H1 (cell line): ENCODE measurements at regions of chr19 and their contacts with region 1.

Region 1: GRCh38 chr19:49676690-49677231 is 310 bp upstream of the PRMT1 start:
- DNase-seq: peak; percentile 99 to 100
- H3K4me3 ChIP-seq: peak overlapping the region; percentile 82 to 99 (median 86)
- H3K27ac ChIP-seq: peak overlapping the region; percentile 100
- H3K4me1 ChIP-seq: peaks cover 2 to 19% (median 11%) of the 10 kb centered on the region in 4 experiments
- H3K27me3 ChIP-seq: no peaks in the 10 kb centered on the region
- CTCF ChIP-seq: no peak
- EP300 ChIP-seq: no peak
- POLR2A ChIP-seq: no peak
- RAD21 ChIP-seq: no peak

Region 2: DNA sequence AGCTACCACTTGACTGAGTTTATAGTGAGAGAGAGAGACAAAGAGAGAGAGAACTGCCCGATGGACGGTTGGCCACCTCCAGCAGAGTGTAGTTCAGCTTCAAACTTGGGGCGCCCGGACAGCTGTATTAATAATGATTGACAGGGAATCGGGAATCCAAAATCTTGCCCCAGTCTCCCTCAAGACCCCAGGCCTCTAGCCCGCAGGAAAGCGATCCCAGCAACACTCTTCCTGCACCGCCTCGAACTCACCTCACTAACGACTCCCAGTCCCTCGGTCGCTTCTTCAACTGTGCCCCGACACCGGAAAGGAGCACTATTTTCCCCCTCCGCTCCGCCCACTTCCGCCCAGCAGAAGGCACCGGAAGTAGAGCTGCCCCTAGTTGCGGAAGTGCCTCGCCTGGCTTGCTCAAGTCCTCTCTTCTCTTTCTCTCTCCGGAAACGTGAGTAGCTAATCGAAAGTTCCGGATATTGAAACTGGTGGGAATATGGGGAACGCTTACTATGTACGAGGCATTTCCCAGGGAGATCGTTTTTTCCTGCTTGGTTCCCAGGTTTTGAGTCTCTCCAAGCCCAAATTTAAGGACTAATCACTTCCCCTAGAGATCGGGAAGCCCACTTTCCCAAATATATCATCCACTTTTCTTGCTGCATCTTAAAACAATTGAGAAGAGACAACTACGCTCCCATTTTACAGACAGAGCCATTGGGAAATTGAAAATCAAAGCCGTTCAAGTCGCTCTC is 96.3 kb before region 1 on chr19 and contains the start of gene NOSIP:
- CTCF ChIA-PET with region 1: interaction called, 3 read pairs
- POLR2A ChIA-PET with region 1: interaction called, 30 read pairs
- DNase-seq: peak; percentile 89 to 95
- H3K4me3 ChIP-seq: peak within 1 kb of the TSS; percentile 87 to 99 (median 92)
- H3K27ac ChIP-seq: peak within 1 kb of the TSS; percentile 51
- H3K4me1 ChIP-seq: peaks cover 2 to 19% (median 8%) of the 10 kb centered on the region in 4 experiments
- H3K27me3 ChIP-seq: no peaks in the 10 kb centered on the region
- CTCF ChIP-seq: no peak
- EP300 ChIP-seq: 0 out of 3 replicates have a peak, but pooled peaks of 1 of the 2 experiments have one; percentile 47
- POLR2A ChIP-seq: peak; percentile 95 to 99
- RAD21 ChIP-seq: no peak
- total RNA-seq, gene NOSIP: 85.1 and 93.8 TPM in 2 replicates

Region 3: DNA sequence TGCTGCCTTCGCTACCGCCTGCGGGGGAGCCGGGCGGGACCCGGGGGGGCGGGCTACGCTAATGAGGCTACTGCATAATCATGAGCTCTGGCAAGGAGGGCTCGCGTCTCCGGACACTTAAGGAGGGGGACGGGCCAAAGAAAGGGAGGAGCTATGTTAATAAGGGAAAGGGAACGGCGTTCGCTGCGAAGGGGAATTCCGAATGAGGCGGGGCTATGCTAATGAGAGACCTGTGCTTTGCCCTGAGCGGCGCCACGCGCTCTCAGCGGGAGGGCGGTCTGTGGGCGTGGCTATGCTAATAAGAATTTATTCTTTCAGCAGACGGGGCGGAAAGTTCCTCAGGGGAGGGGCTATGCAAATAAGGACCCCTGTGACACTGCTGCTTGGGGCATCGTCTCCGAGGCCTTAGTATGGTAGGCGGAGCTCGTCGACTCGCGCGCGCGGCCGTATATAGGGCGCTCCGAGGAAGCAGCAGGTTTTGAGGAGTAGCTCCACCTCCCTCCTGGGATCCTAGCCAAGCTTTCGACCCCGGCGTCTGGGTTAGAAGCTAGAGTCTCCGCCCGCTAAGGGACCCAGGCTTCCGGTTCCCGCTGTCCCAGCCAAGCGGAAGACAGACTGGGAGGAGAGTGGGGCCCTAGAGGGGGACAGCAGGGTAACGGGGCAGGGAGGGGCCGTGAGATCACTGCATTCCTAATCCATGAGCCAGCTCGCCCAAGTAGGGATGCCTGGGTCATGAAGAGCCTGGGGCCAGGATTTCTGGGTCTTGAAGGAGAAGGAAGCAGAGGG is 36.5 kb before region 1 on chr19 and contains the start of gene RRAS:
- CTCF ChIA-PET with region 1: interaction called, 14 read pairs
- POLR2A ChIA-PET with region 1: interaction called, 84 read pairs
- DNase-seq: peak; percentile 100
- H3K4me3 ChIP-seq: peak within 1 kb of the TSS; percentile 38 to 72 (median 66)
- H3K27ac ChIP-seq: peak within 1 kb of the TSS; percentile 93
- H3K4me1 ChIP-seq: peaks cover 2 to 27% (median 15%) of the 10 kb centered on the region in 4 experiments
- H3K27me3 ChIP-seq: no peaks in the 10 kb centered on the region
- CTCF ChIP-seq: no peak
- EP300 ChIP-seq: peak in 1 of 2 experiments; percentile 64; a peak in 2 of 3 replicates
- POLR2A ChIP-seq: peak in 1 of 2 experiments; percentile 63; a peak in 1 of 3 replicates
- RAD21 ChIP-seq: no peak
- total RNA-seq, gene RRAS: 16.9 and 17.7 TPM in 2 replicates

Region 4: DNA sequence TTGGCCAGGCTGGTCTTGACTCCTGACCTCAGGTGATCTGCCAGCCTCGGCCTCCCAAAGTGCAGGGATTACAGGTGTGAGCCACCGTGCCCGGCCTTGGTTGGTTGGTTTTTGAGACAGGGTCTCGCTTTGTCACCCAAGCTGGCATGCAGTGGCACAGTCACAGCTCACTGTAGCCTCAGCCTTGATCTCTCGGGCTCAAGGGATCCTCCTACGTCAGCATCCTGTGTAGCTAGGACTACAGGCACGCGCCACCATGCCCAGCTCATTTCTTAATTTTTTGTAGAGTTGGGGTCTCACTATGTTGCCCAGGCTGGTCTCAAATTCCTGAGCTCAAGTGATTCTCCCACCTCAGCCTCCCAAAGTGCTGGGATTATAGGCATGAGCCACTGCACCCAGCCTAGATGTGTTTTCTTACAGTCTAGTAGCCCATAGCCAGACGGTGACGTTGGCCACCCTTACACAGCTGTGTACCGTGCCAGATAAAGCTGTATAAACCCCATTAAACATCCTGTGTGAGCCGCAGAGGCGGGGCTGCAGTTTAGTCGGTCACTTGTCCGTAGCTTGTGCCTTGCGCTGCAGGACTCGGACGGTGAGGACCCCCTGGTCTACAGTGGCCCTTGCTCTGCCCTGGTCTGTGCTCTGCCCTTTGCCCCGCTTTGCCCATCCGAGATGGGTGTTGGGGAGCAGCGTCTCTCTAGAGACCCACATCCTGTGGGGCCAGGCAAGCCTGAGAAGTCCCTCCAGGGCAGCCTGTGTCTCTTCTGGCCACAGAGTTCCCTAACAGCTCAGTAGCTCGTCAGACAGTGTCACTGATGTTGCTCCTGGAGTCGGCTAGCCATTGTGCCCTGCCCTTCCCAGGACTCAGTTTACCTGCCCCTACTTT is 20.9 kb before region 1 on chr19:
- CTCF ChIA-PET with region 1: interaction called, 39 read pairs
- POLR2A ChIA-PET with region 1: interaction called, 275 read pairs
- DNase-seq: no peak
- H3K4me3 ChIP-seq: no peak overlapping the region
- H3K27ac ChIP-seq: no peak overlapping the region
- H3K4me1 ChIP-seq: peaks cover 0 to 14% (median 5%) of the 10 kb centered on the region in 4 experiments; a peak in 4 of 7 replicates
- H3K27me3 ChIP-seq: no peaks in the 10 kb centered on the region
- CTCF ChIP-seq: no peak
- EP300 ChIP-seq: no peak
- POLR2A ChIP-seq: no peak
- RAD21 ChIP-seq: no peak

Region 5: DNA sequence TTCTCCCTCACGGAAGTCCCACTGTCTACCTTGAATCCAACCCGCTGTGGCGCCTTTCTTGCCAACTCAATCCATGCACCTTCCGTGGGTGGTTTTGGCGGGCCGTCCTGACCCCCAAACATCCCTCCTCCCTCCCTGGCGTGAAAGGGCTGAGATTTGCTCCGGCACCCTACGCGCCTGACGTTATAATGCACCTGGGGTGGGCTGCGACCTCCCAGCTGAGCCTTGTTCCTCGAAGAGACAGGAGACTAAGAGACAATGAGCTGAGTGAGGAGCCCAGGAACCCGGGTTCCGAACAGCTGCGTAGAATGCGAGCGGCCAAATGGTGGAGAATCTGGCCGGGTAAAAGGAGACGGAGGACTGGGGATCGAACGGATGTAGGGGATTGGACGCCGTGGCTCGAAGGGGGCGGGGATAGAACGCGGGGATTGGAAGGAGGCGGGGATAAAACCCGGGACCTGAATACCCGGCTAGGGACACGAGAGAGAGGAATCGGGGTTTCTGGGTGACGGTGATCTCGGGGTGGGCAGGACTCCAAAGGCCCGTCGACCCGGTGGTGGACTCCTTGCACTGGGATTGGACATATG is 14.0 kb after region 1 on chr19 and contains the start of gene CPT1C:
- CTCF ChIA-PET with region 1: interaction called, 11 read pairs
- POLR2A ChIA-PET with region 1: interaction called, 168 read pairs
- DNase-seq: peak; percentile 73 to 94
- H3K4me3 ChIP-seq: peak within 1 kb of the TSS; percentile 88 to 94 (median 92)
- H3K27ac ChIP-seq: peak within 1 kb of the TSS; percentile 57; the same call in 1 of the 2 replicates
- H3K4me1 ChIP-seq: peaks cover 0 to 25% (median 13%) of the 10 kb centered on the region in 4 experiments; a peak in 6 of 7 replicates
- H3K27me3 ChIP-seq: no peaks in the 10 kb centered on the region
- CTCF ChIP-seq: 0 out of 4 replicates have a peak, but pooled peaks of 1 of the 3 experiments have one; percentile 9
- EP300 ChIP-seq: no peak
- POLR2A ChIP-seq: peak; percentile 81; a peak in 2 of 3 replicates
- RAD21 ChIP-seq: no peak
- total RNA-seq, gene CPT1C: 91.8 and 98.3 TPM in 2 replicates